ENCODE measurements at regions of chr3 and their contacts with region 1.

Region 1: GRCh38 chr3:120095226-120095978 is 1.2 kb upstream of the GSK3B start:
- DNase-seq: peak; percentile 92
- H3K4me3 ChIP-seq: peak overlapping the region; percentile 81
- H3K27ac ChIP-seq: peak overlapping the region; percentile 97
- H3K4me1 ChIP-seq: peaks cover 22% of the 10 kb centered on the region
- CTCF ChIP-seq: no peak

Region 2: GRCh38 chr3:119498186-119498987 is 597.0 kb before region 1 on chr3 and contains the start of gene TIMMDC1:
- CTCF ChIA-PET with region 1: no interaction called
- POLR2A ChIA-PET with region 1: interaction called, 4 read pairs
- intact Hi-C with region 1: loop called (anchors 10 kb)
- DNase-seq: peak; percentile 98
- H3K4me3 ChIP-seq: peak within 1 kb of the TSS; percentile 75
- H3K27ac ChIP-seq: peak within 1 kb of the TSS; percentile 66
- H3K4me1 ChIP-seq: peaks cover 29% of the 10 kb centered on the region
- CTCF ChIP-seq: no peak
- total RNA-seq, gene TIMMDC1: 54.6 and 61.0 TPM in 2 replicates

Region 3: GRCh38 chr3:120111898-120112297 is 16.5 kb after region 1 on chr3:
- CTCF ChIA-PET with region 1: no interaction called
- POLR2A ChIA-PET with region 1: interaction called, 11 read pairs
- intact Hi-C with region 1: no loop called
- DNase-seq: no peak
- H3K4me3 ChIP-seq: no peak overlapping the region
- H3K27ac ChIP-seq: no peak overlapping the region
- H3K4me1 ChIP-seq: no peaks in the 10 kb centered on the region
- CTCF ChIP-seq: no peak

Region 4: DNA sequence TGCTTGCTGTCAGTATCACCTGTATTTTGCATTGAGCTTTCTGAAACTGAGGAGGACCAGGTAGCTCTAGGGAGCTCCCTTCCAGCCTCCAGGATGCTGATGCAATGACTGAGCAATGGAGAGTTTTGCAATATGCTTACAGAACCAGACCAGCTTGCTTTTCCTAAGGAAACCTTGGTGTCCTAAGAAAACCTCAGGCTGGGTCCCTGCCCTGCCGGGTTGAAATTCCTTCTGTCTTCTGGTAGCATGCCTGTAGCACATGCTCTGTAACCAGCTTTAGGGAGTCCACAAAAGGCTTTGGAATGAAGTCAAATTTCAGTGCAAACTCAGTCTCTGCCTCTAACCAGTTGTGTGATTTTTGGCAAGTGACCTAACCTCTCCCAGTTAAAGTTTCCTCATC is 64.6 kb after region 1 on chr3:
- CTCF ChIA-PET with region 1: no interaction called
- POLR2A ChIA-PET with region 1: no interaction called
- intact Hi-C with region 1: no loop called
- DNase-seq: no peak
- H3K4me3 ChIP-seq: no peak overlapping the region
- H3K27ac ChIP-seq: no peak overlapping the region
- H3K4me1 ChIP-seq: no peaks in the 10 kb centered on the region
- CTCF ChIP-seq: no peak

Region 5: GRCh38 chr3:120596116-120596852 is 500.9 kb after region 1 on chr3 and contains the start of gene NDUFB4:
- CTCF ChIA-PET with region 1: no interaction called
- POLR2A ChIA-PET with region 1: no interaction called
- intact Hi-C with region 1: loop called (anchors 10 kb)
- DNase-seq: peak; percentile 99
- H3K4me3 ChIP-seq: peak within 1 kb of the TSS; percentile 83
- H3K27ac ChIP-seq: peak within 1 kb of the TSS; percentile 61
- H3K4me1 ChIP-seq: peaks cover 16% of the 10 kb centered on the region
- CTCF ChIP-seq: no peak
- total RNA-seq, gene NDUFB4: 77.3 and 130 TPM in 2 replicates